Motor neuron (in vitro differentiated cells): ENCODE measurements at regions of chr6 and their contacts with region 1.

Region 1: GRCh38 chr6:110682460-110682853 is 132.8 kb downstream of the CDK19 start:
- ATAC-seq: peak; percentile 91 to 99 (median 97)
- H3K4me3 ChIP-seq: no peak overlapping the region
- H3K27ac ChIP-seq: no peak overlapping the region
- H3K4me1 ChIP-seq: no peaks in the 10 kb centered on the region

Region 2: DNA sequence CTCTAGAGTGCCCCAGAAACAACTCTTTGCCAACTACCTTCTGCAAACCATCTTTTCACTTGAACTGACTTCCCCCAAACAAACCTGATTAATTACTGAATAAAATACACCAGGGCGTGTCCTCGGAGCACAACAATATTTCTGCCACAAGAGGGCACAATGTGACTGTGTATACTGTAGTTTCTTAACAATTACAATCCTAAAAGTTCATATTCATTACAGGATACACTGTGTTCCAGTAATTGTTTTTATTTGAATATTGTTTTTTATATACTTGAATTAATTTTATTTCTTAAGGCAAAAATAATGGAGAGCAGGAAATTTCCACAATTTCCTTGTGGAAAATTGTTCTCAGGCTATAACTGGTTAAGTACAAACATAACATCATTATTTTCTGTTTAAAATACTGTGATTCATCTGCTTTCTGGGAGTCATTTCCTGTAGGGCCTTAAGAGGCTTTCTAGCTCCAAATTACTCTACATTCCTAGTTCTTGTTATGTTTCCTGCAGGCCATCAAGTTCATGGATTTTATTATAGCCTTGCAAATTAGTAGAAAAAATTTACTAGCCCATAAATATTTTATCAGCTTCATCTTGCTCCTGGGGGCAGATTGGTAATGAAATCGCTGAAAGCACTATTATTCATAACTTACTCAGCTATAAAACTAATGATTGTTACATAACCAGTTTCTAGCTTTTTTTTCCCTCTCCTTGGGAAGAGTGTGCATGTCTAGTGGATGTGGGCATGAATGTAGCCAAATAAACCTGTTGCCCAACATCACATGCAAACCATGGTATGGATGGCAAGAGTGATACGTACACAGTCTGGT is 154.1 kb before region 1 on chr6:
- in situ Hi-C with region 1: loop called in 1 of 9 experiments (anchors 25 kb)
- ATAC-seq: peak; percentile 47 to 89 (median 62)
- H3K4me3 ChIP-seq: no peak overlapping the region
- H3K27ac ChIP-seq: no peak overlapping the region
- H3K4me1 ChIP-seq: peaks cover 0 to 4% of the 10 kb centered on the region in 2 donors

Region 3: DNA sequence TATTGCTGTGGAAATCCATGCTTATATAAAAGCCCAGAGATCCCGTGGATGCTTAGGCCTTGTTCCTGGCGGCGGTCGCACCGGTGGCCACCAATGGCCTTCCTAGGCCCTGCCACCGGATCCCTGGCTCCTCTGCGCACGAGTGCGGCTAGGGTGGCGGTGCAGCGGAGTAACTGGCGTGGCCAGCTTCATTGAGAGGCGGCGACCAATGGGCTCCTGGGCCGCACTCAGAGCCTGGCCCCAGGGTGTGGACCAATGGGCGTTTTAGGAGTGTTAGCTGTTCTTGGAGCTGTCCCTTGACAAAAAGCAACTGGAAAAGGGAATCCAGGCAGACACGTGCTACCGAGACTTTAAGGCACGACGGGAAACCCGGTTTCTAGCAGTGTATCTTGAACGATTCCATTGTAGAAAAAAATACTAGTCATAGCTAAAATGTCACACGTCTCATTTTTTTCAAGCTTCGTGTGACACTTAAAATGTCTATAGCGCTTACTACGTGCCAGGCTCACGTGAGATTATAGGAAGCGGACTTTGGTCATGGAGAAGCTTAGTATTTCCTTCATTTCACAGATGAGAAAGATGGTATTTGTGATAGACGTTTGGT is 193.8 kb after region 1 on chr6:
- in situ Hi-C with region 1: loop called in 1 of 9 experiments (anchors 25 kb)
- ATAC-seq: peak; percentile 38 to 67 (median 63)
- H3K4me3 ChIP-seq: peak overlapping the region; percentile 44 to 98 (median 63)
- H3K27ac ChIP-seq: peak overlapping the region; percentile 24 to 86
- H3K4me1 ChIP-seq: peaks cover 10 to 31% of the 10 kb centered on the region in 2 donors

Region 4: DNA sequence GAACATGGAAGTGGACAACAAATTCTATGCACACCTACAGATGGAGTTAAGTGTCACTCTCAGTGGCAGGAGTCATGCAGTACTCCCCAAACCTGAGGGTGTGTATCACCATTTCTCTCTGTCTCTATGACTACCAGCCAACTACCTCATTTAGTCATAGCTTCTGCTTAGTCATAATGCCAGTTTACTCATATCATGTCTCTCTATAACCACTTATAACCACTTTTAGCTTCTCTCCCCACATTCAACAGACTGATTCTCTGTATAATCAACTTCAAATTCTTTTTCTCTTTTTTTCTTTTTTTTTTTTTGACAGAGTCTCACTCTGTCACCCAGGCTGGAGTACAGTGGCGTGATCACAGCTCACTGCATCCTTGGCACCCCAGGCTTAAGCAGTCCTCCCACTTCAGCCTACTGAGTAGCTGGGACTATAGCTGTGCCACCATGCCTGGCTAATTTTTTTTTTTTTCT is 262.3 kb after region 1 on chr6:
- in situ Hi-C with region 1: loop called in 1 of 9 experiments (anchors 25 kb)
- ATAC-seq: peak in 7 of 8 experiments; percentile 21 to 100 (median 74)
- H3K4me3 ChIP-seq: no peak overlapping the region
- H3K27ac ChIP-seq: no peak overlapping the region
- H3K4me1 ChIP-seq: no peaks in the 10 kb centered on the region